ENCODE measurements at regions of chr2 and their contacts with region 1.

Region 1: GRCh38 chr2:3827673-3828575 is 124.5 kb downstream of the DCDC2C start:
- DNase-seq: peak; percentile 1
- H3K4me3 ChIP-seq: no peak overlapping the region
- CTCF ChIP-seq: peak; percentile 61

Region 2: GRCh38 chr2:3728104-3729054 is 99.5 kb before region 1 on chr2:
- CTCF ChIA-PET with region 1: interaction called, 88 read pairs
- POLR2A ChIA-PET with region 1: no interaction called
- DNase-seq: peak; percentile 14
- H3K4me3 ChIP-seq: no peak overlapping the region
- CTCF ChIP-seq: peak; percentile 33

Measured in AG04449 (cell line).